Activated naive CD4-positive, alpha-beta T cell treated with anti-CD3 and anti-CD28 coated beads, Interleukin-2, amount 10 ng/mL, durations not matched to agents 7 days and 5 days (primary cell): ENCODE measurements at regions of chr15 and their contacts with region 1.

Region 1: GRCh38 chr15:56869573-56869972 is 48.9 kb upstream of the TCF12 start:
- DNase-seq: peak; percentile 52
- H3K4me3 Mint-ChIP-seq: no peak overlapping the region
- H3K27ac Mint-ChIP-seq: no peak overlapping the region
- H3K4me1 Mint-ChIP-seq: no peaks in the 10 kb centered on the region
- H3K27me3 Mint-ChIP-seq: no peaks in the 10 kb centered on the region

Region 2: GRCh38 chr15:56496635-56497034 is 372.9 kb before region 1 on chr15:
- CTCF ChIA-PET with region 1: interaction called, 137 read pairs
- DNase-seq: no peak
- H3K4me3 Mint-ChIP-seq: no peak overlapping the region
- H3K27ac Mint-ChIP-seq: no peak overlapping the region
- H3K4me1 Mint-ChIP-seq: peaks cover 11% of the 10 kb centered on the region
- H3K27me3 Mint-ChIP-seq: peaks cover 23% of the 10 kb centered on the region

Region 3: DNA sequence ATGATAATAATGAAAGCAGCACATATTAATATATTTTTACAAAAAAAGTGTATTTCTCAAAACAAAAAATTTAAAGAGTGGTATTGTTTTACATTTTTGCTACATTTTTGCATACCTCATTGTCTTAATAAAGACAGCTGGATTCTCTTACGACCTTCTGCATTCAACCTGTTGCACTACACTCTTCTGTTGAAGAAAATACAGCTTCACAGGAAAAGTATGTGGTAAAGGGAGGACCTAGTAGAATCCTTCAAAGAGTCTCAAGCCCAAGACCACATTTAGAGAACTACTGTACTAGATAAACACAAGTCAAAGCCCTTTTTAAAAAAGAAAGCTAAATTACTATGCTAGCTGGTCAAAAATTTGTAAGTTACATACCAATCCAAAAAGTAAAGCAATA is 144.2 kb before region 1 on chr15:
- CTCF ChIA-PET with region 1: no interaction called
- DNase-seq: no peak
- H3K4me3 Mint-ChIP-seq: no peak overlapping the region
- H3K27ac Mint-ChIP-seq: no peak overlapping the region
- H3K4me1 Mint-ChIP-seq: peaks cover 27% of the 10 kb centered on the region
- H3K27me3 Mint-ChIP-seq: no peaks in the 10 kb centered on the region